Activated naive CD4-positive, alpha-beta T cell treated with anti-CD3 and anti-CD28 coated beads for 36 hours (primary cell): ENCODE measurements at regions of chr13 and their contacts with region 1.

Region 1: GRCh38 chr13:32443111-32443510 is 15.2 kb upstream of the N4BP2L1 start:
- DNase-seq: peak; percentile 61
- H3K4me3 Mint-ChIP-seq: no peak overlapping the region
- H3K27ac Mint-ChIP-seq: no peak overlapping the region
- H3K4me1 Mint-ChIP-seq: peaks cover 14% of the 10 kb centered on the region
- H3K27me3 Mint-ChIP-seq: no peaks in the 10 kb centered on the region

Region 2: DNA sequence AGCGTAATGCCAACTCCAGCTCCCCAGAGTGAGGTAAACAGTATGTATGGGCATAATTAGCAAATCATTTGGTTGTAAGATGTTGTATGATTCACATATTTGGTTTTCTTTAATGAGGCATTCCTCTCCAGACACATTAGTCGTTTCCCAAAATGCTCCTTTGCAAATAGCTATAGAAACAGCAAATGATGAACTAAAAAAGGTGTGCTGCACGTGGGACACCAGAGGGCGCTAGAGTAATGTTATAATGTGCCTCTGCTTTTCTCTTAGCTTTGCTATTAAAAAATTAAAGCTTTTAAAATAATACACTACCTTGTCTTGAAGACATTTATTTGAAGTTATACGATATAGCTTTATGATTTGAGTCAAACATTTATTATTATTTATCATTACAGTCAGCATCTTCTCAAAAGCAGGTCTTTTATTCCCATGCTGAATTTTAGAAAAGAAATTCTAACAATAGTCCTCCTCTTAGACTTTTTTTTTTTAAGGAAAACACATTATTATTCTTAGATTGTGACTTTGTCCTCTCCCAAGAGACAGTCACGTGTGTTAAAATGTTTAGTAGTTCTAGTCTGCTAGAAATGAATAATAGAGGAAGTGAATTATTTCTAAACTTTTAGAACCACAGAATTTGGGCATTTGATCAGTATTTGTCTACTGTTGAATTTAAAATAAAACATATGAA is 533.1 kb before region 1 on chr13:
- CTCF ChIA-PET with region 1: interaction called, 3 read pairs
- intact Hi-C with region 1: loop called (anchors 1 kb)
- DNase-seq: peak; percentile 63
- H3K4me3 Mint-ChIP-seq: no peak overlapping the region
- H3K27ac Mint-ChIP-seq: no peak overlapping the region
- H3K4me1 Mint-ChIP-seq: no peaks in the 10 kb centered on the region
- H3K27me3 Mint-ChIP-seq: peaks cover 3% of the 10 kb centered on the region

Region 3: GRCh38 chr13:32019612-32020233 is 423.4 kb before region 1 on chr13:
- CTCF ChIA-PET with region 1: no interaction called
- intact Hi-C with region 1: loop called (anchors 2 kb)
- DNase-seq: peak; percentile 62
- H3K4me3 Mint-ChIP-seq: no peak overlapping the region
- H3K27ac Mint-ChIP-seq: no peak overlapping the region
- H3K4me1 Mint-ChIP-seq: no peaks in the 10 kb centered on the region
- H3K27me3 Mint-ChIP-seq: no peaks in the 10 kb centered on the region

Region 4: GRCh38 chr13:32246468-32246867 is 196.6 kb before region 1 on chr13:
- CTCF ChIA-PET with region 1: interaction called, 3 read pairs
- intact Hi-C with region 1: loop called (anchors 5 kb)
- DNase-seq: peak; percentile 63
- H3K4me3 Mint-ChIP-seq: no peak overlapping the region
- H3K27ac Mint-ChIP-seq: peak overlapping the region; percentile 22
- H3K4me1 Mint-ChIP-seq: no peaks in the 10 kb centered on the region
- H3K27me3 Mint-ChIP-seq: no peaks in the 10 kb centered on the region

Region 5: DNA sequence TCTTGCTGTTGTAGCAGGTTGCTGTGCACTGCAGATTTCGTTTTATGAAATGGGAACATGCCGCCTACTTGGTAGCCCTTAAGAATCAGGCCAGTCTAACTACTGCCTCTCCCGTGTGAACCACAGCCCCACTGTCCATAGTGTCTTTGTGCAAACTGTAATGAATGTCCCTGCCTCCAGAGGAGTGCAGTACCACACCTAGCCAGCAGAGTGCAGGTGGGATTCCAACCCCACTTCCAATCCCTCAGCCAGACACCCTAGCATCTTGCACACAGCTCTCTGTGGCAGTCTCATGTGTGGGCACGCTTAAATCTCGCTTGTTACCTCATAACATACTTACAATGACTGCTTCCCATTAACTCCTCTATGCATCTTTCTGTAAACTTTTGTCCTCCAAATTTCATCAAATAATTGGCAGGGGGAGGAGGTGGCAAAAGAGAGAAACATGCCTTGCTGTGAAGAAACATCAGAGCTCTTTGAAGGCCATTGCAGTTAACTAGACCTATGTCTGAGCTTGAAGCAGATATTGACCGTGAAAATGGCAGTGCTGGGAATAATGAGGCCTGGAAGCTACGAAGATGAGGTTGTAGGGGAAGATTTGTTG is 175.2 kb before region 1 on chr13:
- CTCF ChIA-PET with region 1: no interaction called
- intact Hi-C with region 1: loop called (anchors 2 kb)
- DNase-seq: peak; percentile 67
- H3K4me3 Mint-ChIP-seq: no peak overlapping the region
- H3K27ac Mint-ChIP-seq: no peak overlapping the region
- H3K4me1 Mint-ChIP-seq: peaks cover 5% of the 10 kb centered on the region
- H3K27me3 Mint-ChIP-seq: no peaks in the 10 kb centered on the region

Region 6: GRCh38 chr13:32299893-32300292 is 143.2 kb before region 1 on chr13:
- CTCF ChIA-PET with region 1: no interaction called
- intact Hi-C with region 1: loop called (anchors 1 kb)
- DNase-seq: peak; percentile 10
- H3K4me3 Mint-ChIP-seq: no peak overlapping the region
- H3K27ac Mint-ChIP-seq: no peak overlapping the region
- H3K4me1 Mint-ChIP-seq: peaks cover 10% of the 10 kb centered on the region
- H3K27me3 Mint-ChIP-seq: peaks cover 16% of the 10 kb centered on the region

Region 7: DNA sequence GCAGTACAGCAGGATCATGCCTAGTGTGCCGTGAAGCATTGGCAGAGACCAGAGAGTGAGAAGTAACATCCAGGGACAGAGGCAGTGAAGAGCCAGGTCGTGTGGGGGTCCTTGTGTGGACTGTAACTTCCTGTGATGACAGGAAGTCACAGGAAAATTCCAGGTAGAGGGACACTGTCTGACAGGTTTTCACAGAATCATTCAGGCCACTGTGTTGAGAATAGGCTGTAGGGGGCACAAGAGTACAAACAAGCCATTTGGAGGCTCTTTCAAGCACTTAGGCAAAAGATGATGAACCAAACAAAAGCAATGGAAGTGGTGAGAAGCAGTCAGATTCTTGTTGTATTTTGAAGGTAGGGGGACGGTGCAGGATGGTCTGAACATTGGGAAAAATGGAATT is 61.6 kb before region 1 on chr13:
- CTCF ChIA-PET with region 1: no interaction called
- intact Hi-C with region 1: loop called (anchors 1 kb)
- DNase-seq: peak; percentile 10
- H3K4me3 Mint-ChIP-seq: no peak overlapping the region
- H3K27ac Mint-ChIP-seq: no peak overlapping the region
- H3K4me1 Mint-ChIP-seq: no peaks in the 10 kb centered on the region
- H3K27me3 Mint-ChIP-seq: no peaks in the 10 kb centered on the region